HCT116 (cell line): ENCODE measurements at regions of chr13 and their contacts with region 1.

Region 1: GRCh38 chr13:20160847-20161274 is at the start of gene GJA3:
- DNase-seq: no peak
- ATAC-seq: peak; percentile 84
- H3K4me3 ChIP-seq: peak within 1 kb of the TSS; percentile 53 to 65
- H3K27ac ChIP-seq: peak within 1 kb of the TSS; percentile 92
- H3K4me1 ChIP-seq: peaks cover 10 to 29% of the 10 kb centered on the region in 2 experiments
- H3K27me3 ChIP-seq: no peaks in the 10 kb centered on the region
- CTCF ChIP-seq: no peak
- POLR2A ChIP-seq: no peak
- RAD21 ChIP-seq: no peak
- total RNA-seq, gene GJA3: 8.0 TPM

Region 2: GRCh38 chr13:19927117-19927748 is 233.6 kb before region 1 on chr13:
- CTCF ChIA-PET with region 1: no interaction called
- POLR2A ChIA-PET with region 1: no interaction called
- RAD21 ChIA-PET with region 1: no interaction called
- intact Hi-C with region 1: loop called (anchors 1 kb)
- DNase-seq: peak; percentile 62
- ATAC-seq: peak; percentile 77
- H3K4me3 ChIP-seq: peak overlapping the region in 1 of 2 experiments; percentile 25; a peak in 1 of 4 replicates
- H3K27ac ChIP-seq: peak overlapping the region; percentile 47; the same call in 1 of the 2 replicates
- H3K4me1 ChIP-seq: peaks cover 7 to 21% of the 10 kb centered on the region in 2 experiments; a peak in 3 of 4 replicates
- H3K27me3 ChIP-seq: no peaks in the 10 kb centered on the region
- CTCF ChIP-seq: peak; percentile 64 to 77 (median 65); a peak in 5 of 6 replicates
- POLR2A ChIP-seq: no peak
- RAD21 ChIP-seq: peak; percentile 68

Region 3: DNA sequence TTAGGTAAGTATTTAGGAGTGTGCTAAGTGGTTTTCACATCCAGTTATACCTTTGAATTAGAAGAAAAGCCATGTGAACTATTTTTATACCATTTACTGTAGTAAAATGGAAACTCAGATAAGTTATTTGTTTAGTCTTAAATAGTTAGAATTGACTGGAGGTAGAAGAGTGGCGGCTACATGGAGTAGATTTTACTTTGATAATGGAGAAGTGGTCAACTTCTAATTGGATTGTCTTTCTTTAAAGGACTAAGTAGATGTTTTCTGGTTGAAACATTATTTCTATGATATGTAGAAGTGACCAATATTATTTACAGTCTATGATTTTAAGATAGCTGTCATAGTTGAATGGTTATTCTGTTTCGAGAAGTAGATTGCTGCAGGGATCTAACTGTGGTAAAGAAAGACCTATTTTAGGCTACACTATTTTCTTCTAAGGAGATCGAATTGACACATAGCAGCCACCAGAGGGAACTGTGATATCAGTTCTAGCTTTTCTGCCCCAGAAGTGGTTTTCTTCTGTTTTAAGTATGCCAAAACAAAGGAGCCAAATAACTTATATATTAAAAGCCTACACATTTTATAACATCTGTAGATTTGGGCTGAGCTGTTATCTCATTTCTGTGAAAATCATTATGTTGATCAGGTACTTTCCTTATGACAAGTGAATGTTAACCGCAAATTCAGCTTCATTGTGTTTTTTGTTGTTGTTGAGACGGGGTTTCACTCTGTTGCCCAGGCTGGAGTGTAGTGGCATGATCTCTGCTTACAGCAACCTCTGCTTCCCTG is 176.2 kb before region 1 on chr13:
- CTCF ChIA-PET with region 1: interaction called, 7 read pairs
- POLR2A ChIA-PET with region 1: no interaction called
- RAD21 ChIA-PET with region 1: interaction called in 1 of 2 experiments, 3 read pairs
- intact Hi-C with region 1: loop called (anchors 1 kb)
- DNase-seq: peak; percentile 12
- ATAC-seq: peak; percentile 76
- H3K4me3 ChIP-seq: no peak overlapping the region
- H3K27ac ChIP-seq: no peak overlapping the region
- H3K4me1 ChIP-seq: peaks cover 3 to 4% of the 10 kb centered on the region in 2 experiments; a peak in 2 of 4 replicates
- H3K27me3 ChIP-seq: no peaks in the 10 kb centered on the region
- CTCF ChIP-seq: peak; percentile 20 to 74 (median 63); a peak in 4 of 6 replicates
- POLR2A ChIP-seq: no peak
- RAD21 ChIP-seq: peak; percentile 47

Region 4: DNA sequence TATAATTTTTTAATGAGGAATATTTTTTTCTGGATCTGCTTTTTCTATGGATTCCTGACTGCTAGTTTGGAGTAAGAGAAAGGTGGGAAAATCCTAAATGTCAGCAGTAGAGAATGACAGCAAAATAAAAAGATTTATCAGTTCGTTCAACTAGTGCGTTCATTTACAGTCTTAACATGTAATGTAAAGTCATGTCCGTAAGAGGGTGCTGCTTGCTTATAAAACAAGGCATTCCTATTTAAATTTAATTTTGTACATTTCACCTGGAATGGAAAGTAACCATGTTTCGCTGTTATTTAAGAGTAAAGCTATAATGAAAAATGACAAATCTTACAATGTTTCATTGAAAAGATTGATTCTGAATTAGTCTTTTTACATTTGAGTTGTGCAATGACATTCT is 125.7 kb before region 1 on chr13:
- CTCF ChIA-PET with region 1: interaction called, 4 read pairs
- POLR2A ChIA-PET with region 1: no interaction called
- RAD21 ChIA-PET with region 1: no interaction called
- intact Hi-C with region 1: loop called (anchors 5 kb)
- DNase-seq: no peak
- ATAC-seq: no peak
- H3K4me3 ChIP-seq: no peak overlapping the region
- H3K27ac ChIP-seq: no peak overlapping the region
- H3K4me1 ChIP-seq: no peaks in the 10 kb centered on the region
- H3K27me3 ChIP-seq: no peaks in the 10 kb centered on the region
- CTCF ChIP-seq: peak in 2 of 3 experiments; percentile 6 to 31; a peak in 1 of 6 replicates
- POLR2A ChIP-seq: no peak
- RAD21 ChIP-seq: no peak; the same call in 1 of the 2 replicates

Region 5: GRCh38 chr13:20057963-20058362 is 102.9 kb before region 1 on chr13:
- CTCF ChIA-PET with region 1: no interaction called
- POLR2A ChIA-PET with region 1: no interaction called
- RAD21 ChIA-PET with region 1: no interaction called
- intact Hi-C with region 1: loop called (anchors 5 kb)
- DNase-seq: no peak
- ATAC-seq: no peak
- H3K4me3 ChIP-seq: no peak overlapping the region
- H3K27ac ChIP-seq: no peak overlapping the region
- H3K4me1 ChIP-seq: no peaks in the 10 kb centered on the region
- H3K27me3 ChIP-seq: no peaks in the 10 kb centered on the region
- CTCF ChIP-seq: 0 out of 6 replicates have a peak, but pooled peaks of 1 of the 3 experiments have one; percentile 17
- POLR2A ChIP-seq: no peak
- RAD21 ChIP-seq: peak; percentile 14; the same call in 1 of the 2 replicates

Region 6: GRCh38 chr13:20090349-20090748 is 70.5 kb before region 1 on chr13:
- CTCF ChIA-PET with region 1: interaction called, 3 read pairs
- POLR2A ChIA-PET with region 1: no interaction called
- RAD21 ChIA-PET with region 1: no interaction called
- intact Hi-C with region 1: loop called (anchors 1 kb)
- DNase-seq: no peak
- ATAC-seq: 0 out of 2 replicates have a peak, but pooled peaks have one; percentile 50
- H3K4me3 ChIP-seq: no peak overlapping the region
- H3K27ac ChIP-seq: no peak overlapping the region
- H3K4me1 ChIP-seq: no peaks in the 10 kb centered on the region
- H3K27me3 ChIP-seq: no peaks in the 10 kb centered on the region
- CTCF ChIP-seq: peak in 2 of 3 experiments; percentile 15 to 30; a peak in 2 of 6 replicates
- POLR2A ChIP-seq: no peak
- RAD21 ChIP-seq: peak; percentile 40; the same call in 1 of the 2 replicates

Region 7: GRCh38 chr13:20127577-20128466 is 33.0 kb before region 1 on chr13:
- CTCF ChIA-PET with region 1: interaction called, 16 read pairs
- POLR2A ChIA-PET with region 1: interaction called, 3 read pairs
- RAD21 ChIA-PET with region 1: interaction called in 1 of 2 experiments, 5 read pairs
- intact Hi-C with region 1: loop called (anchors 2 kb)
- DNase-seq: no peak
- ATAC-seq: peak; percentile 85
- H3K4me3 ChIP-seq: peak overlapping the region; percentile 48 to 57
- H3K27ac ChIP-seq: peak overlapping the region; percentile 91
- H3K4me1 ChIP-seq: peaks cover 11 to 45% of the 10 kb centered on the region in 2 experiments
- H3K27me3 ChIP-seq: no peaks in the 10 kb centered on the region
- CTCF ChIP-seq: peak in 2 of 3 experiments; percentile 44 to 61; a peak in 4 of 6 replicates
- POLR2A ChIP-seq: no peak
- RAD21 ChIP-seq: peak; percentile 37; the same call in 1 of the 2 replicates

Region 8: DNA sequence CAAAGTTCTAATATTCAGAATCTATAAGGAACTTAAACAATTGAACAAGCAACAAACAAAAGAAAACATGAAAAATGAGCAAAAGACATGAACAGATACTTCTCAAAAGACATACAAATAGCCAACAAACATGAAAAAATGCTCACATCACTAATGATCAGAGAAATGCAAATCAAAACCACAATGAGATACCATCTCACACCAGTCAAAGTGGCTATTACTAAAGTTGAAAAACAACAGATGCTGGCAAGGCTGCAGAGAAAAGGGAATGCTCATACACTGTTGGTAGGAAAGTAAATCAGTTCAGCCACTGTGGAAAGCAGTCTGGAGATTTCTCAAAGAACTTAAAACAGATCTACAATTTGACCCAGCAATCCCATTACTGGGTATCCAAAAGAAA is 290.5 kb after region 1 on chr13:
- CTCF ChIA-PET with region 1: no interaction called
- POLR2A ChIA-PET with region 1: no interaction called
- RAD21 ChIA-PET with region 1: no interaction called
- intact Hi-C with region 1: no loop called
- DNase-seq: no peak
- ATAC-seq: no peak
- H3K4me3 ChIP-seq: no peak overlapping the region
- H3K27ac ChIP-seq: no peak overlapping the region
- H3K4me1 ChIP-seq: no peaks in the 10 kb centered on the region
- H3K27me3 ChIP-seq: no peaks in the 10 kb centered on the region
- CTCF ChIP-seq: no peak
- POLR2A ChIP-seq: no peak
- RAD21 ChIP-seq: no peak

Region 9: DNA sequence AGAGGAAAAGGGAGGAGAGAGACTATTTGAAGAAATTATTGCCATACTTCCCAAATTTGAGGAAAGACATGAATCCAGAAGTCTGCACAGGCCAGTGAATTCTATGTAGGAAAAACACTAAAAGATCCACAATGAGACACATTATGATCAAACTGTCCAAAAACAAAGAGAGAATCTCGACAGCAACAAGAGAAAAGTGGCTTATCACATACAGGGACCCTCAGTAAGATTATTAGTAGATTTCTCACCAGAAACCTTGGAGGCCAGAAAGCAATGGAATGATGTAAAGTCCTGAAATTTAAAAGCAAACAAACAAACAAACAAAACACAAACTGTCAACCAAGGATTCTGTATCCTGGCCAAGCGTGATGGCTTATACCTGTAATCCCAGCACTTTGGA is 486.9 kb after region 1 on chr13:
- CTCF ChIA-PET with region 1: no interaction called
- POLR2A ChIA-PET with region 1: no interaction called
- RAD21 ChIA-PET with region 1: no interaction called
- intact Hi-C with region 1: no loop called
- DNase-seq: no peak
- ATAC-seq: no peak
- H3K4me3 ChIP-seq: no peak overlapping the region
- H3K27ac ChIP-seq: no peak overlapping the region
- H3K4me1 ChIP-seq: no peaks in the 10 kb centered on the region
- H3K27me3 ChIP-seq: no peaks in the 10 kb centered on the region
- CTCF ChIP-seq: no peak
- POLR2A ChIP-seq: no peak
- RAD21 ChIP-seq: no peak

Region 10: DNA sequence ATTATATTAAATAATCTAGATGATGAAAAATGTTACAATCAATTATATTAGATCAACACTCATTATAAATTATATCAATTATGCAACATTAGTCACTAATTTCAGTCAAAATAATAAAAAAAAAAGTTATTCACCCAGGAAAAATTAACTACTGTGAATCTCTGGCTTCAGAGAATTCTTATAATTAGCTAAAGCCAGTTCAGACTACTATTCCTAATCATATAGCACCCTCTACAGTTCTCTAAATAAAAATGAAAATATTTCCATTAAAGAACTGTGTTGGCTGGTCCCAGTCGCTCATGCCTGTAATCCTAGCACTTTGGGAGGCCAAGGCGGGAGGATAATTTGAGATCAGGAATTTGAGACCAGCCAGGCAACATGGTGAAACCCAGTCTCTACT is 708.7 kb after region 1 on chr13:
- CTCF ChIA-PET with region 1: no interaction called
- POLR2A ChIA-PET with region 1: no interaction called
- RAD21 ChIA-PET with region 1: no interaction called
- intact Hi-C with region 1: no loop called
- DNase-seq: no peak
- ATAC-seq: no peak
- H3K4me3 ChIP-seq: no peak overlapping the region
- H3K27ac ChIP-seq: no peak overlapping the region
- H3K4me1 ChIP-seq: no peaks in the 10 kb centered on the region
- H3K27me3 ChIP-seq: no peaks in the 10 kb centered on the region
- CTCF ChIP-seq: peak in 1 of 3 experiments; percentile 5; a peak in 1 of 6 replicates
- POLR2A ChIP-seq: no peak
- RAD21 ChIP-seq: peak; percentile 42; the same call in 1 of the 2 replicates